Heart right ventricle (tissue), 16 donors: ENCODE measurements at regions of chr2 and their contacts with region 1.

Region 1: GRCh38 chr2:105919826-105920225 is 175.1 kb downstream of the NCK2 start:
- DNase-seq: no peak
- ATAC-seq: peak in 2 of 8 donors; percentile 15 to 37
- H3K4me3 ChIP-seq: no peak overlapping the region
- H3K27ac ChIP-seq: peak overlapping the region in 4 of 10 donors; percentile 30 to 65 (median 56)
- H3K4me1 ChIP-seq: peaks cover 0 to 31% (median 16%) of the 10 kb centered on the region in 9 donors
- H3K27me3 ChIP-seq: no peaks in the 10 kb centered on the region
- CTCF ChIP-seq: peak; percentile 19 to 50 (median 38)

Region 2: DNA sequence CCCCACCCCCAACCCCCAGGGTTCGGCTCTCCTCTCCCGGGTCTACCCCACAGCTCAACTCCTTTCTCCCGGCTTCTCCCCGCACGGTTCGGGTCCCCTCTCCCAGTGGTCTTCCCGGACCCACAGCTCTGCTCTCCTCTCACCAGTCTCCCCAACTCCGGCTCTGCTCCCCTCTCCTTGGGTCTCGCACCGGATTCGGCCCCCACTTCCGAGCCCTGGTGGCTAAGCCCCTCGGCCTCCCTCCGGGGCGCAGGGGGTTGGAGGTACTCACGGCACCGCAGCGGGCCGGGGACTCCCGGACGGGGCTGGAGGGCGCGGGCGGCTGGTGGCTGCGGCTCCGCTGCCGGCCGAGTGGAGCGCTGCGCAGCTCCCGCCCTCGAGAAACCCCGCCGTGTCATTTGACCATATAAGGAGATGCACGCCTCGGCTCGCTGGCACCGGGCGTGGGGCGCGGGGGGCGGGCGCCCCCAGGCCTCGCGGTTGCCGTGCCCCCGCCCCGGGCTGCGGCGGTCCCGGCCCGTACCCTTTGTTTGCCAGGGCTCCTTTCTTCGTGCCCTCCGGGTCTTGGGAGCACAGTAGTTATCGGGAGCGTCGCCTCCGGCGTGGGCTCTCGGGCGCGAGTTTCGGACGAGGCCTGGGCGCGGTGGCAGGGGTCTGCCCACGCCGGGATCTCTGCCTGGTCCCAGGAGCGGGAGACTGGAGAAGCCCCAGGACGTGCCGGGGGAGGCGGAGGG is 521.0 kb before region 1 on chr2 and contains the start of gene FHL2:
- intact Hi-C with region 1: loop called in 1 of 10 experiments (anchors 10 kb)
- DNase-seq: peak; percentile 66 to 71
- ATAC-seq: peak; percentile 62 to 85 (median 68)
- H3K4me3 ChIP-seq: peak within 1 kb of the TSS; percentile 47 to 75 (median 66)
- H3K27ac ChIP-seq: peak within 1 kb of the TSS; percentile 80 to 95 (median 91)
- H3K4me1 ChIP-seq: peaks cover 7 to 82% (median 28%) of the 10 kb centered on the region in 9 donors
- H3K27me3 ChIP-seq: peaks cover 0 to 36% (median 13%) of the 10 kb centered on the region in 7 donors
- CTCF ChIP-seq: peak; percentile 10 to 65 (median 45)
- total RNA-seq, gene FHL2: 598 to 2,354 (median 1,687) TPM

Region 3: GRCh38 chr2:105712981-105713596 is 206.7 kb before region 1 on chr2:
- intact Hi-C with region 1: no loop called
- DNase-seq: no peak
- ATAC-seq: peak in 3 of 8 donors; percentile 13 to 29 (median 22)
- H3K4me3 ChIP-seq: no peak overlapping the region
- H3K27ac ChIP-seq: no peak overlapping the region
- H3K4me1 ChIP-seq: no peaks in the 10 kb centered on the region
- H3K27me3 ChIP-seq: no peaks in the 10 kb centered on the region
- CTCF ChIP-seq: no peak

Region 4: GRCh38 chr2:106020821-106021661 is 101.2 kb after region 1 on chr2:
- intact Hi-C with region 1: loop called in 1 of 10 experiments (anchors 10 kb)
- DNase-seq: peak; percentile 16 to 59
- ATAC-seq: peak in 6 of 8 donors; percentile 18 to 52 (median 38)
- H3K4me3 ChIP-seq: no peak overlapping the region
- H3K27ac ChIP-seq: peak overlapping the region in 4 of 10 donors; percentile 6 to 55 (median 40)
- H3K4me1 ChIP-seq: peaks cover 0 to 40% (median 25%) of the 10 kb centered on the region in 9 donors
- H3K27me3 ChIP-seq: no peaks in the 10 kb centered on the region
- CTCF ChIP-seq: no peak

Region 5: DNA sequence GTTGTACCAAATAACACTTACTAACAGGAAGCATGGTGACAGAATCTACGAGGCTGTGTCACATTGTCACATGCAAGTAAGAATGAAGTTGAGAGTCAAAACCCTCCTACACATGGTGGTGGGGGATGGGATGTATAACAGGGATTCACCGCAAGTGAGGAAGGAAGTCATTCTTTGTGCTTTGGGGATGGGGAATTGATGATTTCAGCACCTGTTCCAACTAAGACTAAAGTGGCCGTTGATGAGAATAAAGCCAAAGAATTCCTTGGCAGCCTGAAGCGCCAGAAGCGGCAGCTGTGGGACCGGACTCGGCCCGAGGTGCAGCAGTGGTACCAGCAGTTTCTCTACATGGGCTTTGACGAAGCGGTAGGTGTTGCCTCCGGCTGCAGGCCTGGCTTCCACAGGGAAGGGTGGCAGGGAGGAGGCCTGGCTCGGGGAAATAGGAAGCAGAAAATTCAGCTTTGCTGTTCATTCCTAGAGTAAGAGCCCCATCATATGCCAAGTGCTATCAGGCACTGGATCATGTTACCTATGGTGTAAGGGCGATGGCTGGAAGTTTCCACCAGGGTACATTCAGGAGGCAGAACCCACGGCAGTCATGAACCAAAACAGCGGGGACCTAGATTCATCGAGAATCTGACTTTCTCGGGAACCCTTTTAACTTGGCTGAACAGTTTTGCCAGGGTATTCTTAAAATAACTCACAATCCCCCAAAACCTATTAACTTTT is 154.0 kb after region 1 on chr2:
- intact Hi-C with region 1: loop called in 2 of 10 experiments (anchors 10 kb)
- DNase-seq: no peak
- ATAC-seq: peak in 4 of 8 donors; percentile 11 to 74 (median 51)
- H3K4me3 ChIP-seq: no peak overlapping the region
- H3K27ac ChIP-seq: no peak overlapping the region
- H3K4me1 ChIP-seq: peaks cover 0 to 19% (median 0%) of the 10 kb centered on the region in 9 donors
- H3K27me3 ChIP-seq: no peaks in the 10 kb centered on the region
- CTCF ChIP-seq: no peak

Region 6: GRCh38 chr2:106104332-106105062 is 184.7 kb after region 1 on chr2:
- intact Hi-C with region 1: no loop called
- DNase-seq: peak in 1 of 2 donors; percentile 45
- ATAC-seq: peak in 5 of 8 donors; percentile 28 to 66 (median 55)
- H3K4me3 ChIP-seq: no peak overlapping the region
- H3K27ac ChIP-seq: no peak overlapping the region
- H3K4me1 ChIP-seq: peaks cover 0 to 22% (median 14%) of the 10 kb centered on the region in 9 donors
- H3K27me3 ChIP-seq: no peaks in the 10 kb centered on the region
- CTCF ChIP-seq: peak; percentile 86 to 98 (median 94)